Aorta (tissue), 5 donors: ENCODE measurements at regions of chrX and their contacts with region 1.

Region 1: GRCh38 chrX:41333744-41334259 is at the start of gene DDX3X:
- DNase-seq: peak; percentile 93 to 97
- ATAC-seq: peak; percentile 94
- H3K4me3 ChIP-seq: peak within 1 kb of the TSS; percentile 86 to 90
- H3K27ac ChIP-seq: peak within 1 kb of the TSS; percentile 89 to 97
- H3K4me1 ChIP-seq: no peaks in the 10 kb centered on the region
- H3K27me3 ChIP-seq: no peaks in the 10 kb centered on the region
- total RNA-seq, gene DDX3X: 361 to 465 TPM

Region 2: DNA sequence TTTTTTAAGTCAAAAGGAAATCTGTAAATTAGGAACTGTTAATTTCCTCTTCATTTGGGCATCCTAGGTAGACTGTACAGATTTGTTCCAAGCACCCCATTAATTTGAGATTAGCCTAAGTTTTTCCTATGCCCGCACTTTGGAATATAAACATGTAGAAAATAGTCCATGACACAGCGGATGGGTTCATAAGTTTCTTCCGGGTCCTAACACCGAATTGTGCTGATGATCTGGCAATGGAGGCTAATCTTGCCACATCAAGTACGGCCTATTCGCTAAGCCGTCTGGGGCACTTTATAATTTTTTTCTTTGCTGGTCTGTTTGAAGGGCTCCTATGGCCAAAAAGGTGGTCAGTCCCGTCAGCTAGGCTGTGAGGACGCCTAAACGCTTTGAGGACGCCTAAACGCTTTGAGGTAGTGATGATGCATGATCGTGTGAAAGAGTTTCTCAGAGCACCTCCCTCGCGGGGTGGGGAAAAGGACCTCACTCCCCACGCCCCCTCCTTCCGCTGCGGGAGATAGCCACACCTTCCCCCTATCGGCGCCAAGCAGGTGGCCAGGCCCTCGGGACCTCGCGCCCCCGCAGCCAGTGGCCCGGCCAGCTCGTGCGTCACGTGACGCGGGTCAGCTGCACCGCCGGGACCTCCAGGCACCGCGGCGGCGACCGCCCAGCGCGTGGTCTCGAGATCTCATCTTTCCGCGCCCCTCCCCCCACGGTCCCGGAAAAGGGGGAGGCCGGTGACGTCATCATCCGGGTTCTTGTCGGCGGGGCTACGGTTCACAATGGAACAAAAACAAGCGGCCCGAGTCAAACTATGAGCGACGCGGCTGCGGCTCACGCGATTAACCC is 249.5 kb before region 1 on chrX:
- intact Hi-C with region 1: loop called in 1 of 2 experiments (anchors 5 kb)
- DNase-seq: peak; percentile 98 to 100
- ATAC-seq: peak; percentile 94
- H3K4me3 ChIP-seq: peak overlapping the region; percentile 88 to 95
- H3K27ac ChIP-seq: peak overlapping the region in 1 of 2 donors; percentile 95
- H3K4me1 ChIP-seq: no peaks in the 10 kb centered on the region
- H3K27me3 ChIP-seq: no peaks in the 10 kb centered on the region